ENCODE measurements at regions of chr2 and their contacts with region 1.

Region 1: DNA sequence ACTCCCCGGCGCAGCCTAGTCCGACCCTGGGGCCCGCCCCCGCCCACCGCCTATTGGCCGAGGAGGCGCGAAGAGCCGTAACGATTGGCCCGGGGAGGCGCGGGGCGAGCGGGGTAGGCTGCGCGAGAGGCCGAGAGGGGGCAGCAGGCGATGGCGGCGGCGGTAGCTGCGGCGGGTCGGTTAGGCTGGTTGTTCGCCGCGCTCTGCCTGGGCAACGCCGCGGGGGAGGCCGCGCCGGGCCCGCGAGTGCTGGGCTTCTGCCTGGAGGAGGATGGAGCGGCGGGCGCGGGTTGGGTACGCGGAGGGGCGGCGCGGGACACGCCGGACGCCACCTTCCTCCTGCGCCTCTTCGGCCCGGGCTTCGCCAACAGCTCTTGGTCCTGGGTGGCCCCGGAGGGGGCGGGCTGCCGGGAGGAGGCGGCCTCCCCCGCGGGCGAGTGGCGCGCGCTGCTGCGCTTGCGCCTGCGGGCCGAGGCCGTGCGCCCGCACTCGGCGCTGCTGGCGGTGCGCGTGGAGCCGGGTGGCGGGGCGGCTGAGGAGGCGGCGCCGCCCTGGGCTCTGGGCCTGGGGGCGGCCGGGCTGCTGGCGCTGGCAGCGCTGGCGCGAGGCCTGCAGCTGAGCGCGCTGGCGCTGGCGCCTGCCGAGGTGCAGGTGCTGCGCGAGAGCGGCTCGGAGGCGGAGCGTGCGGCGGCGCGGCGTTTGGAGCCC is at the start of gene CNNM3:
- DNase-seq: peak; percentile 94
- H3K4me3 ChIP-seq: peak within 1 kb of the TSS; percentile 66 to 74 (median 67)
- H3K27ac ChIP-seq: no peak within 1 kb of the TSS
- H3K4me1 ChIP-seq: peaks cover 18% of the 10 kb centered on the region
- H3K27me3 ChIP-seq: no peaks in the 10 kb centered on the region
- CTCF ChIP-seq: peak; percentile 13 to 69
- total RNA-seq, gene CNNM3: 5.7 to 5.8 TPM

Region 2: DNA sequence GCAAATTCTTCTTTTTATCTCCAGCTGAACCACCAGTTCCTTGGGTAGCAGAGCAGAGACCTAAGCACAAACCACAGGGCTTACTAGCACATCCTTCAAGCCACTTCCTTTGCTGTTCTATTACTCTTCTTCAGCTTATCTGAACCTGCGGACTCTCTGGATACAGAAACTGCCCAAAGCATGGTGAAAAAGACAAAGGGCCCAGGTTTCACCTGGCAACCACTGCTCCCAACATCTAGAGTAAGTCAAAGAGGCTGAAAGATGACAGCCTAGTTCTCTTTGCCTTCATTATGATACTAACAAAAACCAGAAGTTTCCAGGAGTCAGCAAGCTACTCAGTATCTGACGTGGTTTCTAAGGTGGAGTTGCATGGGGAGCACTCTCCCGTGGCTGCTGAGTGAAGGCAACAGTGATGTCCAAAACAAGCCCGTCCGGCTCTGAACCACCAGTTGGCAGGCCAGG is 221.6 kb before region 1 on chr2:
- CTCF ChIA-PET with region 1: no interaction called
- dilution Hi-C with region 1: loop called (anchors 5 kb)
- in situ Hi-C with region 1: no loop called
- intact Hi-C with region 1: no loop called
- DNase-seq: no peak
- H3K4me3 ChIP-seq: no peak overlapping the region
- H3K27ac ChIP-seq: no peak overlapping the region
- H3K4me1 ChIP-seq: peaks cover 5% of the 10 kb centered on the region
- H3K27me3 ChIP-seq: no peaks in the 10 kb centered on the region
- CTCF ChIP-seq: no peak

Region 3: DNA sequence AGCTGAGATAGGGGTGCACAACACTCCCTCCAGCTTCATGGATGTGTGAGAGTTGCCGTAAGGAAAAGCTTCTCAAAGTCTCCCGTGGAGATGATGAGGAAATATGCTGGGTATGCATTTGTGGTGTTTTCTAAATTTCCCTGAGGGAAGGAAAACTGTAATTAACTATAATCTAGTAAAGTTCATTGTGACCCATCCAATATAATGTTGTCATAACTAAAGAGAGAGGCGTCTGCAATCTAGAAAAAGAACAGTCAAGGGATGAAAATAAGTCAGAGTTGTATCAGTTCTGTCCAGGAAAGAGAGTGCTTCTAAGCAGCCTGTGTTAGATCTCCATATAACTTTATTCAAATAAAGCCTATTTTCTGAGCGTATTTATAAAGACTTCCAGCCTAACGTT is 69.1 kb before region 1 on chr2:
- CTCF ChIA-PET with region 1: no interaction called
- dilution Hi-C with region 1: loop called (anchors 5 kb)
- in situ Hi-C with region 1: no loop called
- intact Hi-C with region 1: no loop called
- DNase-seq: no peak
- H3K4me3 ChIP-seq: no peak overlapping the region
- H3K27ac ChIP-seq: no peak overlapping the region
- H3K4me1 ChIP-seq: no peaks in the 10 kb centered on the region
- H3K27me3 ChIP-seq: no peaks in the 10 kb centered on the region
- CTCF ChIP-seq: no peak

Region 4: GRCh38 chr2:96760036-96760985 is 56.0 kb before region 1 on chr2 and contains the start of gene CNNM4:
- CTCF ChIA-PET with region 1: no interaction called
- dilution Hi-C with region 1: no loop called
- in situ Hi-C with region 1: no loop called
- intact Hi-C with region 1: loop called (anchors 5 kb)
- DNase-seq: peak; percentile 90
- H3K4me3 ChIP-seq: peak within 1 kb of the TSS; percentile 46 to 86 (median 78)
- H3K27ac ChIP-seq: no peak within 1 kb of the TSS
- H3K4me1 ChIP-seq: peaks cover 51% of the 10 kb centered on the region
- H3K27me3 ChIP-seq: no peaks in the 10 kb centered on the region
- CTCF ChIP-seq: peak in 1 of 2 donors; percentile 24
- total RNA-seq, gene CNNM4: 8.1 to 8.2 TPM

Region 5: DNA sequence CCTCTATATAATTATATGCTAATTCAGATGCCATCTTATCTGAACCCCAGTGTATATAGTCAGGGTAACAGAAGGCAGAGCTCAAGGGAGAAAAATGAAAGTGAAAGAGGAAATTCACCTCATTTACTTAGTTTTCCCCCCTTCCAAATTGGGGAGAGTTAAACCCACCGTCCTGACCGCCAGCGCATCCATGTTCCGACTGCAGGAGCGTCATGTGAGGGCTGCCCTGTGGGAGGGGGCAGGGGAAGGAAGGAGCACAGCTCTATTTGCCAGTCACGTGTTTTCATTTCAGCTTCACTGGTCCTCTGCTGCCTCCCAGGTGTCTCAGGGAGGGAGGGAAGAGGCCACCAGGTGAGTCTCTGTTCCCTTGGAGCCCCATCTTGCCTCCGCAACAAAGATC is 42.4 kb before region 1 on chr2:
- CTCF ChIA-PET with region 1: no interaction called
- dilution Hi-C with region 1: no loop called
- in situ Hi-C with region 1: no loop called
- intact Hi-C with region 1: no loop called
- DNase-seq: no peak
- H3K4me3 ChIP-seq: peak overlapping the region; percentile 29 to 50 (median 43)
- H3K27ac ChIP-seq: peak overlapping the region; percentile 7
- H3K4me1 ChIP-seq: peaks cover 4% of the 10 kb centered on the region
- H3K27me3 ChIP-seq: no peaks in the 10 kb centered on the region
- CTCF ChIP-seq: no peak

Region 6: GRCh38 chr2:96869822-96870625 is 53.7 kb after region 1 on chr2 and contains the start of gene SEMA4C:
- CTCF ChIA-PET with region 1: no interaction called
- dilution Hi-C with region 1: loop called (anchors 5 kb)
- in situ Hi-C with region 1: no loop called
- intact Hi-C with region 1: no loop called
- DNase-seq: no peak
- H3K4me3 ChIP-seq: peak within 1 kb of the TSS; percentile 77 to 88 (median 85)
- H3K27ac ChIP-seq: peak within 1 kb of the TSS; percentile 32
- H3K4me1 ChIP-seq: peaks cover 10% of the 10 kb centered on the region
- H3K27me3 ChIP-seq: no peaks in the 10 kb centered on the region
- CTCF ChIP-seq: no peak
- total RNA-seq, gene SEMA4C: 13.2 to 14.0 TPM

Region 7: GRCh38 chr2:96913398-96914202 is 97.3 kb after region 1 on chr2:
- CTCF ChIA-PET with region 1: no interaction called
- dilution Hi-C with region 1: loop called (anchors 5 kb)
- in situ Hi-C with region 1: no loop called
- intact Hi-C with region 1: no loop called
- DNase-seq: no peak
- H3K4me3 ChIP-seq: no peak overlapping the region
- H3K27ac ChIP-seq: no peak overlapping the region
- H3K4me1 ChIP-seq: peaks cover 7% of the 10 kb centered on the region
- H3K27me3 ChIP-seq: no peaks in the 10 kb centered on the region
- CTCF ChIP-seq: no peak

Region 8: DNA sequence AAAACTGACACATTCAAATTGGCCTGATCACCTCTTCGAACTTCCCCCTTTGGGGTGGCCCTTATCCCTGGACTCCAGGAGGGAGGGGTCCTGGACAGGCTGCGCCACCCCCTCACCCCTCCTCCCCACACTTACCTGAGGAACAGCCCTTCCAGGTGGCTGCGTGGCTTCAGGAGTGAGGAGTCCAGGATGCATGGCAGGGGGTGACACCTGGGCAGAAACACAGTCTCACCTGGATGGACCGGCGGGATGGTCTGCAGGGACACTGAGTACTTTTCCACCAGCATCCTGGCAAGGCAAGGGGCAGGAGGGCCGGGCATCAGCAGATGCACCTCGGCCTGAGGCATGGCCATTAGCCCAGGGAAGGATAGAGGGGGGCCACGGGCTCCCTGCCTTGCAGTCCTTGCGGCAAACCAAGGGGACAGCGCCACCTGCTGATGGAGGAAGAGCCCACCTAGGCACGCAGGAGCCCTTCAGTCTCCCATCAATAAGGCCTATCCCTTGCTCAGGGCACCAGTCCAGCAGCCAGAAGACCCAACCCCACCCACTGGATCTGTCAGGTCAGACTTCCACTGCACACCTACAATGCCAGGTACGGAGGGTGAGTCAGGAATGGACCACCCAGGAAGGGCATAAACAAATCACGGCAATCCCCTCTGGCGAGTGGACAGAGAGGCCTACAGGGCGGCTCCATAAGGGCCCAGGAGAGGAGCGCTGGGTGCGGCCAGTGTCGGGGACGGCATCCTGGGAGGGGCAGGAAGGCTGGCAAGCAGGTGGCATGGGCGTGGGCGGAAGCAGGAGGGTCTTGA is 144.1 kb after region 1 on chr2:
- CTCF ChIA-PET with region 1: no interaction called
- dilution Hi-C with region 1: no loop called
- in situ Hi-C with region 1: no loop called
- intact Hi-C with region 1: loop called (anchors 2 kb)
- DNase-seq: peak; percentile 54
- H3K4me3 ChIP-seq: no peak overlapping the region
- H3K27ac ChIP-seq: no peak overlapping the region
- H3K4me1 ChIP-seq: peaks cover 10% of the 10 kb centered on the region
- H3K27me3 ChIP-seq: no peaks in the 10 kb centered on the region
- CTCF ChIP-seq: peak; percentile 91 to 95

Measured in mammary epithelial cell (primary cell).